GM12878 (cell line): ENCODE measurements at regions of chr3 and their contacts with region 1.

Region 1: DNA sequence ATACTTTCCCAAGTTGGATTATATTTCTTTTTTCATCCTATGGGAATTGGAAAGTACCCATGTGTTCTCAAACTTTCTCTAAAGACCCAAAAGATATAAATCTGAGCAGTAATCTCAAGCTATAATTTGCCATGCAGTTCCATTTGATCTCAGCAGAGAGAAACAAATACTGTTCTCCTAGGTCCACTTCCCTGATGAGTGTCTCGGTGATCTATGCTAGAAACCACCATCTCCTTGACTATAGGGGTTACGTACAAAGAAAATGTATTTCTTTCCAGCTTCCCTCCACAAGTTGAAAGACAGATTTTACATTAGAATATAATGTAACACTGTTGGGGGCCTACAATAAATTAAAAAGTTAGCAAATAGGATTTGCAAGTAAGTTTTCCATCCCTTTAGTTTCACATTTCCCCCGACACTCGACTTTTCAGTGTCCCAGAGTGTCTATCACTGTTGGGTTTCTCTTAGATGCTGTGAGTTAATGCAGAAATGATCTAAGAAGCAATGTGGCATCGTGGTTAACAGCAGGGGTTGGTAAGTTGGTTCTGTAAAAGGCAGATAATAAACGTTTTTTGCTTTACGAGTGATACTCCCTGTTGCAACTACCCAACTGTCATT is 465.1 kb upstream of the CFAP20DC start:
- DNase-seq: no peak
- ATAC-seq: no peak
- H3K4me3 ChIP-seq: no peak overlapping the region
- H3K27ac ChIP-seq: no peak overlapping the region
- H3K4me1 ChIP-seq: no peaks in the 10 kb centered on the region
- H3K27me3 ChIP-seq: no peaks in the 10 kb centered on the region
- CTCF ChIP-seq: no peak
- EP300 ChIP-seq: no peak
- POLR2A ChIP-seq: no peak
- RAD21 ChIP-seq: no peak

Region 2: DNA sequence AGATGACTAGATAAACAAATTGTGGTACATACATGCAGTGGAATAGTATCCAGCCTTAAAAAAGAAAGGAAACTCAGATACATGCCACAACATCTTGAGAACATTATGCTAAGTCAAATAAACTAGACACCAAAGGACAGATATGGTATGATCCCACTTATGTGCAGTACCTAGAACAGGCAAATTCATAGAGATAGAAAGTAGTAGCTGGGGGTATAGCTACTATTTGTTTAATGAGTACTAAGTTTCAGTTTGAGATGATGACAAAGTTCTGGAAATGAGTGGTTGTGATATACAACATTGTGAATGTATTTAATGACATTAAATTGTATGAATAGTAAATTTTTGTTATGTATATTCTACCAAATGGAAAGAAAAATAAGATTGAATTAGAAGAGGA is 12.0 kb after region 1 on chr3:
- CTCF ChIA-PET with region 1: interaction called, 10 read pairs
- POLR2A ChIA-PET with region 1: interaction called, 9 read pairs
- RAD21 ChIA-PET with region 1: no interaction called
- SMC1A ChIA-PET with region 1: interaction called, 21 read pairs
- in situ Hi-C with region 1: no loop called
- intact Hi-C with region 1: no loop called
- DNase-seq: no peak
- ATAC-seq: peak; percentile 76
- H3K4me3 ChIP-seq: no peak overlapping the region
- H3K27ac ChIP-seq: no peak overlapping the region
- H3K4me1 ChIP-seq: no peaks in the 10 kb centered on the region
- H3K27me3 ChIP-seq: no peaks in the 10 kb centered on the region
- CTCF ChIP-seq: no peak
- EP300 ChIP-seq: no peak
- POLR2A ChIP-seq: no peak
- RAD21 ChIP-seq: no peak

Region 3: GRCh38 chr3:59631482-59631881 is 116.5 kb after region 1 on chr3:
- CTCF ChIA-PET with region 1: no interaction called
- POLR2A ChIA-PET with region 1: no interaction called
- RAD21 ChIA-PET with region 1: no interaction called
- SMC1A ChIA-PET with region 1: no interaction called
- in situ Hi-C with region 1: no loop called
- intact Hi-C with region 1: no loop called
- DNase-seq: no peak
- ATAC-seq: no peak
- H3K4me3 ChIP-seq: no peak overlapping the region
- H3K27ac ChIP-seq: no peak overlapping the region
- H3K4me1 ChIP-seq: no peaks in the 10 kb centered on the region
- H3K27me3 ChIP-seq: no peaks in the 10 kb centered on the region
- CTCF ChIP-seq: no peak
- EP300 ChIP-seq: no peak
- POLR2A ChIP-seq: no peak
- RAD21 ChIP-seq: no peak

Region 4: GRCh38 chr3:59688636-59689035 is 173.7 kb after region 1 on chr3:
- CTCF ChIA-PET with region 1: no interaction called
- POLR2A ChIA-PET with region 1: no interaction called
- RAD21 ChIA-PET with region 1: no interaction called
- SMC1A ChIA-PET with region 1: no interaction called
- in situ Hi-C with region 1: no loop called
- intact Hi-C with region 1: no loop called
- DNase-seq: no peak
- ATAC-seq: no peak
- H3K4me3 ChIP-seq: no peak overlapping the region
- H3K27ac ChIP-seq: no peak overlapping the region
- H3K4me1 ChIP-seq: no peaks in the 10 kb centered on the region
- H3K27me3 ChIP-seq: no peaks in the 10 kb centered on the region
- CTCF ChIP-seq: no peak
- EP300 ChIP-seq: no peak
- POLR2A ChIP-seq: no peak
- RAD21 ChIP-seq: no peak